ENCODE measurements at regions of chr6 and their contacts with region 1.

Region 1: GRCh38 chr6:2103644-2104523 is 141.5 kb downstream of the GMDS start:
- H3K4me3 Mint-ChIP-seq: no peak overlapping the region
- H3K27ac Mint-ChIP-seq: no peak overlapping the region
- H3K4me1 Mint-ChIP-seq: peaks cover 7% of the 10 kb centered on the region
- H3K27me3 Mint-ChIP-seq: no peaks in the 10 kb centered on the region

Region 2: DNA sequence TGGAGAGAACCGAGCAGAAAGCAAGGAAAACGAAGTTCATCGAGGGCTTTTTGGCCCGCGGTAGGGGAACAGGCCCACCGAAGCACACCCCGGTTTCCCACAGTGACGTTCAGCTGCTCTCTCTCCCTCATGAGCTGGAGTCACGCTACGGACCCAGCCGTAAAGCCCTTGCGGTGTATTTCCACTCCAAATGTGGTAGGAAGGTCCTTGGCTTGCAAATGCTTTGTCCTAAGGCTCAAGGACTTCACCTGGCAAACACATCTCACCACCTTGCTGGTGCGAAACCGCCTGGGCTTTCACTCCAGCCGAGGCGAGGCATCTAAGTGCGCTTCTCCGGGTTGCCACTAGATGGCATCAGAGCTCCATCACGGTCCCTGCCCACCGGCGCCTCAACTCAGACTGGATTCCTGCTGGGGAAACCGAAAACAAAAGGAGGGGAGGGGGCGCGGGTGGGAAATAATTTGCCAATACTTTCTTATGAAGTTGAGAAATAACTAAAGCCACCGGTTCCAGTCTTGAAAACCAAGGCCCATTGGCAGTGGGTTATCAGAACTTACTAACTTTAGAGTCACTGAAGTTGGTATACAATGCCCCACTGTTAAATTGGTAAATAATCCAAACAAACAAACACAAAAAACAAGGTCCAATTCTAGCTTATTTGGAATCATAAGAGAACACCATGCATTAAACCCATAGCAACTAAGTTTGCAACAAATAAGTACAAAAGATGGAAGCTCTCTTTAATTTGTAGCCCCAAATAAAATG is 507.6 kb before region 1 on chr6:
- intact Hi-C with region 1: loop called (anchors 2 kb)
- H3K4me3 Mint-ChIP-seq: no peak overlapping the region
- H3K27ac Mint-ChIP-seq: no peak overlapping the region
- H3K4me1 Mint-ChIP-seq: peaks cover 4% of the 10 kb centered on the region
- H3K27me3 Mint-ChIP-seq: peaks cover 81% of the 10 kb centered on the region

Region 3: GRCh38 chr6:1604158-1605030 is 499.5 kb before region 1 on chr6:
- intact Hi-C with region 1: loop called (anchors 1 kb)
- H3K4me3 Mint-ChIP-seq: peak overlapping the region; percentile 44
- H3K27ac Mint-ChIP-seq: no peak overlapping the region
- H3K4me1 Mint-ChIP-seq: peaks cover 39% of the 10 kb centered on the region
- H3K27me3 Mint-ChIP-seq: peaks cover 92% of the 10 kb centered on the region

Region 4: DNA sequence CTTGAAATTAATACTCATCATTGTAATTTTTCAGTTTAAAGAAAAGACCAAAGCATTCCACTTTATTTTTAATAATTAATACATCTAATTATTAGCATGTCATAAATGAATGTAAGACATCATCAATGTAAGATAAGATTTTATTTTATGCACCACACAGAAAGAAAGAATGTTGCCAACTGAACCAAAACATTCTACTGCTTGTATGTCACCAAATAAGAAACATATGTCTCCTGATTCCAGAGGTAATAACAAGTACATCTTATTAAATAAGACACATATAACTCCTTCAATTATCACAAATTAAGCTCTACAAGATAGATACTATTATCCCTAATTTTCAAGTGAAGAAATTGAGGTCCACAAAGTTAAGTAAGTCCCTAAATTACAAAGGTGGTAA is 48.0 kb before region 1 on chr6:
- intact Hi-C with region 1: no loop called
- H3K4me3 Mint-ChIP-seq: no peak overlapping the region
- H3K27ac Mint-ChIP-seq: no peak overlapping the region
- H3K4me1 Mint-ChIP-seq: no peaks in the 10 kb centered on the region
- H3K27me3 Mint-ChIP-seq: no peaks in the 10 kb centered on the region

Region 5: DNA sequence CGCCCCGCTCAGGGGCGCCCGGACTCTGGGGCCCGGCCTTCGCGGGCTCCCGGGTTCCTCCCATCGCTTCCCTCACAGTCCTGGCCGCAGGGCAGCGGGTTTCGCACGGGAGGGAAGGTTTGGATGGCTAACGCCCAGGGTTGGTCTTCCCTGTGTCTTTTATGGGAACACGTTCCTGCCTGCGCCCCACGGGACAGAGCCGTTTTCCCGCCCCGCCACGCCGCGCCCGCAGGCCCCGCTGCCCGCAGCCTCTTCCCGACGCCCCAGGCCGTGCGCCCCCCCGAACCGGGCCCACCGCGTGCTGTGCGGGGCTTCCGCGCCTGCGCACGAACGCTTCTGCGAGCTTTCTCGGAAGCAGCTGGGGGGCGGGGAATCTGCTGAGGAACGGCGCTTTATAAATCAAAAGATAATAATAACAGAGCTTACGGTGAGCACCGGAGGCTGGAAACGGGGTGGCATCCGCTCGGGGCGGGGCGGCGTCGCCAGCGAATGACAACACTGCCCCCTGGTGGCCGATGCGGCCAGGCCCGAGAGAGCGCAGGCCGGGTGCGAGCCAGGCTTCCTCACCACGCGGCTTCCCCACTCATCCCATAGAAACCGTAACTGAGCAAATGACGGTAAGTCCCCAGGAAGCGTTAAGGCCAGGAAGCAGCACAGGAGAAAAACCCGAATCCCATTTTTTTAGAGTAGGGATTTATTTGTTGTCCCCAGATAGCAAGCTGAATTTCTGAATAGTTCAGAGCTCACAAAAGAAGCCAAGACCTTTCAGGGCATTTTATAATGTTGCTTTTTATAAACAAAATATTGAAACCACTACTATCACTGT is 530.5 kb after region 1 on chr6:
- intact Hi-C with region 1: loop called (anchors 10 kb)
- H3K4me3 Mint-ChIP-seq: peak overlapping the region; percentile 70
- H3K27ac Mint-ChIP-seq: no peak overlapping the region
- H3K4me1 Mint-ChIP-seq: no peaks in the 10 kb centered on the region
- H3K27me3 Mint-ChIP-seq: peaks cover 28% of the 10 kb centered on the region

Region 6: GRCh38 chr6:2695454-2696095 is 591.7 kb after region 1 on chr6:
- intact Hi-C with region 1: loop called (anchors 10 kb)
- H3K4me3 Mint-ChIP-seq: no peak overlapping the region
- H3K27ac Mint-ChIP-seq: no peak overlapping the region
- H3K4me1 Mint-ChIP-seq: no peaks in the 10 kb centered on the region
- H3K27me3 Mint-ChIP-seq: peaks cover 2% of the 10 kb centered on the region